K562 (cell line): ENCODE measurements at regions of chr14 and their contacts with region 1.

Region 1: GRCh38 chr14:20657216-20658128 is 16.0 kb upstream of the OR6S1 start:
- DNase-seq: peak; percentile 40 to 54 (median 46)
- ATAC-seq: peak; percentile 75
- H3K4me3 ChIP-seq: peak overlapping the region; percentile 23; the same call in 1 of the 2 replicates
- H3K27ac ChIP-seq: no peak overlapping the region
- H3K4me1 ChIP-seq: peaks cover 11 to 15% of the 10 kb centered on the region in 2 experiments; a peak in 3 of 5 replicates
- H3K27me3 ChIP-seq: peaks cover 0 to 31% of the 10 kb centered on the region in 2 experiments; a peak in 2 of 5 replicates
- CTCF ChIP-seq: peak; percentile 36 to 46 (median 41); a peak in 4 of 6 replicates
- EP300 ChIP-seq: no peak
- POLR2A ChIP-seq: no peak
- RAD21 ChIP-seq: no peak

Region 2: GRCh38 chr14:20690848-20691523 is 33.5 kb after region 1 on chr14:
- CTCF ChIA-PET with region 1: interaction called, 6 read pairs
- POLR2A ChIA-PET with region 1: interaction called, 5 read pairs
- in situ Hi-C with region 1: no loop called
- intact Hi-C with region 1: loop called (anchors 5 kb)
- DNase-seq: peak; percentile 41 to 70 (median 52)
- ATAC-seq: peak; percentile 87
- H3K4me3 ChIP-seq: no peak overlapping the region
- H3K27ac ChIP-seq: no peak overlapping the region
- H3K4me1 ChIP-seq: no peaks in the 10 kb centered on the region; a peak in 1 of 5 replicates
- H3K27me3 ChIP-seq: no peaks in the 10 kb centered on the region
- CTCF ChIP-seq: peak; percentile 70 to 79 (median 70)
- EP300 ChIP-seq: no peak
- POLR2A ChIP-seq: no peak
- RAD21 ChIP-seq: peak; percentile 80 to 85